Tibial artery (tissue), 4 donors: ENCODE measurements at regions of chr1 and their contacts with region 1.

Region 1: GRCh38 chr1:184827600-184828368 is 73.1 kb upstream of the EDEM3 start:
- DNase-seq: no peak
- H3K4me3 ChIP-seq: no peak overlapping the region
- H3K27ac ChIP-seq: peak overlapping the region; percentile 73 to 81
- H3K4me1 ChIP-seq: peaks cover 0 to 80% (median 54%) of the 10 kb centered on the region in 4 donors
- H3K27me3 ChIP-seq: no peaks in the 10 kb centered on the region
- CTCF ChIP-seq: no peak

Region 2: DNA sequence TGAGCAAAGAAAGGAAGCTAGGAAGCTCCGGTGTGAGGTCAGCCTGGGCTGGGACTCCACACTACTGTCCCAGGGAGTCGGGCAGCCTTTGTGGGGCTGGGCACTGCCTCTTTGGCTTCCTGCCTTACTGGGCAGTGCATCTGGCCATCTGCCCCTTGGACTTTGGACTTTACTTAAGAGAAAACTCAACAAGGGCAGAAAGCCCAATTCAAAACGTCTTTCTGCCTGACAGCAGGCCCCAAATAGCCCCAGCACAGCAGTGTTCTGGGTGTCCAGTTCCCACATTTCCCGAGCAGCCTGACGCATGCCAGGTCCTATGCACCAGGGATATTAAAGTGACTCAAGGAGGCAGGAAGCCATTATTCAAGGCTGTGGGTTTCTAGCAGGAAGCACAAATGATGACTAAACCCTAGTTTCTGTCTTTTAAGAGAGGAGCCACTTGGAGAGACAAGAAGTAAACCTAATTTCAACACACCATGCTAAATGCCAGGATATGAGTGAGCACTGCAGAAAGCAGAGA is 35.3 kb before region 1 on chr1:
- intact Hi-C with region 1: no loop called
- DNase-seq: peak; percentile 92 to 93
- H3K4me3 ChIP-seq: peak overlapping the region in 1 of 2 donors; percentile 14
- H3K27ac ChIP-seq: peak overlapping the region; percentile 69 to 74
- H3K4me1 ChIP-seq: peaks cover 0 to 24% (median 18%) of the 10 kb centered on the region in 4 donors
- H3K27me3 ChIP-seq: no peaks in the 10 kb centered on the region
- CTCF ChIP-seq: no peak

Region 3: GRCh38 chr1:184973272-184974055 is 145.7 kb after region 1 on chr1:
- intact Hi-C with region 1: loop called (anchors 5 kb)
- DNase-seq: peak; percentile 47 to 77
- H3K4me3 ChIP-seq: peak overlapping the region; percentile 92 to 97
- H3K27ac ChIP-seq: peak overlapping the region; percentile 93 to 95
- H3K4me1 ChIP-seq: peaks cover 0 to 50% (median 26%) of the 10 kb centered on the region in 4 donors
- H3K27me3 ChIP-seq: no peaks in the 10 kb centered on the region
- CTCF ChIP-seq: no peak